ENCODE measurements at regions of chr4 and their contacts with region 1.

Region 1: GRCh38 chr4:140861359-140862176 is 105.4 kb upstream of the TBC1D9 start:
- DNase-seq: peak; percentile 28
- H3K4me3 Mint-ChIP-seq: no peak overlapping the region
- H3K27ac Mint-ChIP-seq: no peak overlapping the region
- H3K4me1 Mint-ChIP-seq: peaks cover 7% of the 10 kb centered on the region
- H3K27me3 Mint-ChIP-seq: peaks cover 6% of the 10 kb centered on the region

Region 2: DNA sequence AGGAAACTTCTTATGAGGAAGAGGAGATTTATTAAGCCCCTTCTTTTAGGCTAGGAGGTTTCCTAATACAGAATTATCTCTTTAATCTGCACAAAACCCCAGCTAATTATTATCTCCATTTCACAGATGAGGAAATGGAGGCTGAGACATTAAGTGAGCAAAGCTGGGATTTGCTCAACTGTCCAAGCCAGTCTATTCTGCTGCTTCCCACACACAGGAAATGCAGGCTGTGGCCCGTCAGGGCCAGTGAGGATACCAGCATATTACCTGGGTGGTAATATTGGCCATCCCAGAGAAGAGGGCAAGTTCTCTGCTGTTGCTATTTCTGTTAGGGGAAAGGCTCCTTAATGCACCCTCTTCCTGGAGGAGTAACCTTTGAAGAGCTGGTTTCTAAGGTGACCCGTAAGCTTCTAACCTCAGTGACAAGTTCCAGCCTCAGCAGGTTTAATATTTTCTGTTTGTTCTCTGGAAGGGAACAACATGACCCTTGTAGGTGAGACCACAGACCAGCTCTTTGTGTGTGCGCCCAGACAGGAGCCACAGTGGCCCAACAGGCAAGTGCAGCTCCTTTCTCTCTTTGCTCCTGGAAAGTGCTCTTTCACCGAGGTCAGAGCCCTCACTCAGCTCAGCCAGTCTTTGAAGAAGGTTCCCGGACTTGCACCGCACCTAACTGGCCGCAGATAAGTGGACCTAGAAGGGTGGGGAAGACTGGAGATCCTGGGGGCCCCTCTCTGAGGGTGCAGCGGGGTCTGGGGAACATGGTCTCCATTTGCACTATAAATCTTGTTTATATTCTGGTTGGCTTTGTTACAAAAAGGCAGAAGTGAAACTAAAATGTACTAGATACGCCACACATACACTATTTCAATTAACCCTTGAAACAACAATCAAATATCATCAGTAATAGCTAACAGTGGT is 140.9 kb before region 1 on chr4:
- intact Hi-C with region 1: no loop called
- DNase-seq: no peak
- H3K4me3 Mint-ChIP-seq: peak overlapping the region; percentile 23
- H3K27ac Mint-ChIP-seq: no peak overlapping the region
- H3K4me1 Mint-ChIP-seq: no peaks in the 10 kb centered on the region
- H3K27me3 Mint-ChIP-seq: peaks cover 2% of the 10 kb centered on the region

Region 3: DNA sequence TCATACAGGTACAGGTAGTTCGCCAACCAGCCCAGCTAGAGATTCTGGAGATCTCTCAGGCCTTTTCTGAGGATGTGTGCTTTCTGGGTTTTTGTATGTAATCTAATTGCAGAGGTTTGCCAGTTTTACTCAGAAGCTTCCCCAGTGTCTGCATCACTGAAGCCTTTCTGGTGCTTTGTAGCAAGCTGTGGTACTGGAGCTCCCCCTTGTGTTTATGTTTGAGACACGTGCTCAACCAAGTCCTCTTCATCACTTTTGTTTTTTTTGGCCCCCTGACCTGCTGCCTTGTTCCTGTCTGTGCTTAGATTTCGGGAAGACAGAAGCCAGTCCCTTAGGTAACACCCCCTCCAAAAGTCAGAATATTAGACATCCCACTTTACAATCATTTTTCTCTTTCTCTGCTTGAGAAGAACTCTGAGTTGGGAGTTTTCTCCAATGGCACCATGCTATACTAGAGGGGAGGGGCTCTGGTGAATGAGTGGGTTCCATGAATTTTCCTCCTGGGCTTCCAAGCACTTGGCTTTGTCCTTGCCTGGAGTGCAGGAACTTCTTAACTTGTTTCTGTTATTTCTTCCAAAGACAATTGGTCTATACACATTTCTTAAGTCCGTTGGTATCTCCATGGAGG is 23.0 kb after region 1 on chr4:
- intact Hi-C with region 1: loop called (anchors 1 kb)
- DNase-seq: peak; percentile 5
- H3K4me3 Mint-ChIP-seq: no peak overlapping the region
- H3K27ac Mint-ChIP-seq: no peak overlapping the region
- H3K4me1 Mint-ChIP-seq: no peaks in the 10 kb centered on the region
- H3K27me3 Mint-ChIP-seq: peaks cover 2% of the 10 kb centered on the region

Region 4: DNA sequence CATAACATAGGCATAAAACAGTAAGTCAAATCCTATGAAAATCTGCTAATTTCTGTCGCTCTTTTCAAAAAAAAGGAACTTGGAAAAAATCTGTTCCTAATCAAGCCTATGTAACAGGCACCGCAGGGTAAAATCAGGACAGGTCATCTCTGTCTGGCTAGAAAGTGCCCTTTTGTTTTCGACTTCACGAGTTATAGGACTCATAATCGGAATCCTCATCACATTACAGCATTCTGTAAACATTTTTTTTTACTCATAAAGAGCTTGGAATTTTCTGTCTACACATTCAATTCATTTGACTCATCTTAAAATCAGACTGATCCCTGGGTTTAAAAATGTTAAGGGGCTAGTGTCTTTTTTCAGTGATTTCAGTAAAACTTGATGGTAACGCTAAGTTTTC is 76.3 kb after region 1 on chr4:
- intact Hi-C with region 1: no loop called
- DNase-seq: no peak
- H3K4me3 Mint-ChIP-seq: no peak overlapping the region
- H3K27ac Mint-ChIP-seq: no peak overlapping the region
- H3K4me1 Mint-ChIP-seq: no peaks in the 10 kb centered on the region
- H3K27me3 Mint-ChIP-seq: no peaks in the 10 kb centered on the region

Region 5: GRCh38 chr4:141109983-141110382 is 248.4 kb after region 1 on chr4:
- intact Hi-C with region 1: no loop called
- DNase-seq: no peak
- H3K4me3 Mint-ChIP-seq: no peak overlapping the region
- H3K27ac Mint-ChIP-seq: no peak overlapping the region
- H3K4me1 Mint-ChIP-seq: no peaks in the 10 kb centered on the region
- H3K27me3 Mint-ChIP-seq: no peaks in the 10 kb centered on the region

Region 6: DNA sequence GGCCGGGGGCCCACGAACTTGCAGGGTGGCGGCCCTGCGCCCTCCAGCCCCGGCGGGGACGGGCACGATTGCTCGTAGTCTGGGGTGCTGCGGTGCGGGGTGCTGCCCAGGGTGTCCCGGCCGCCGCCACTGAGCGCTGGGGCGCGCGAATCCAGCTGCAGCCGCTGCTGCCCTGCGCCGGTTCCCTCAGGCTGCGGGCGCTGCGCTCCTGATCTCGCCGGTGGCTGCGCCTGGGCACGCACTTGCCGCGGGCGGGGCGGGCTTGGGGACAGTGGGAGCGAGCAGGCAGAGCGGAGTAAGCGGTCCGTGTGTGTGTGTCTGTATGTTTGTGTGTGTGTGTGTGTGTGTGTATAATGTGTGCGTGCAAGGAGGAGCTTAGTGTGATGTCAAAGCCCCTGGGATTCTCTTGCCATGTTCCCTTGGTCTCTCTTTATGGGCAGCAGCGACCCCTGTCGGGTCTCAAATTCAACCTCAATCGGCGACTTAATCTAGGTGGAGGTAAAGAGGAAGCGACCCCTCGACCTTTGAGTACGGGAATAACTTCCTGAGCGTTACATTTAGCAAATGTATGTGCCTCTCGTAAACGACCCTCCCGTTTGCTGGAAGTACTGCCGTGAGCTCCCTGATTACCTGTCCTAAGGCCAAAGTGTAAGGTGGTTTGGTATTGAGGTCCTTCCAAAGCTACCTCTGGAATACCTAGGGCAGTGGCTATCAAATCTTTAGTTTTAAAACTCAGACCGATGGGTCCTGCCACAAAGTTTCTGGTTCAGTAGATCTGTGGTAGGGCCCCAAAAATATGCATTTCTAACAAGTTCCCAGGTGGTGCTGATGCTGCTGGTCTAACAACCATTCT is 271.8 kb after region 1 on chr4 and contains the start of gene RNF150:
- intact Hi-C with region 1: loop called (anchors 1 kb)
- DNase-seq: peak; percentile 2
- H3K4me3 Mint-ChIP-seq: peak within 1 kb of the TSS; percentile 87
- H3K27ac Mint-ChIP-seq: peak within 1 kb of the TSS; percentile 38
- H3K4me1 Mint-ChIP-seq: peaks cover 8% of the 10 kb centered on the region
- H3K27me3 Mint-ChIP-seq: peaks cover 68% of the 10 kb centered on the region
- total RNA-seq, gene RNF150: 0.07 TPM in 1 of 2 replicates, not detected in the other

Region 7: DNA sequence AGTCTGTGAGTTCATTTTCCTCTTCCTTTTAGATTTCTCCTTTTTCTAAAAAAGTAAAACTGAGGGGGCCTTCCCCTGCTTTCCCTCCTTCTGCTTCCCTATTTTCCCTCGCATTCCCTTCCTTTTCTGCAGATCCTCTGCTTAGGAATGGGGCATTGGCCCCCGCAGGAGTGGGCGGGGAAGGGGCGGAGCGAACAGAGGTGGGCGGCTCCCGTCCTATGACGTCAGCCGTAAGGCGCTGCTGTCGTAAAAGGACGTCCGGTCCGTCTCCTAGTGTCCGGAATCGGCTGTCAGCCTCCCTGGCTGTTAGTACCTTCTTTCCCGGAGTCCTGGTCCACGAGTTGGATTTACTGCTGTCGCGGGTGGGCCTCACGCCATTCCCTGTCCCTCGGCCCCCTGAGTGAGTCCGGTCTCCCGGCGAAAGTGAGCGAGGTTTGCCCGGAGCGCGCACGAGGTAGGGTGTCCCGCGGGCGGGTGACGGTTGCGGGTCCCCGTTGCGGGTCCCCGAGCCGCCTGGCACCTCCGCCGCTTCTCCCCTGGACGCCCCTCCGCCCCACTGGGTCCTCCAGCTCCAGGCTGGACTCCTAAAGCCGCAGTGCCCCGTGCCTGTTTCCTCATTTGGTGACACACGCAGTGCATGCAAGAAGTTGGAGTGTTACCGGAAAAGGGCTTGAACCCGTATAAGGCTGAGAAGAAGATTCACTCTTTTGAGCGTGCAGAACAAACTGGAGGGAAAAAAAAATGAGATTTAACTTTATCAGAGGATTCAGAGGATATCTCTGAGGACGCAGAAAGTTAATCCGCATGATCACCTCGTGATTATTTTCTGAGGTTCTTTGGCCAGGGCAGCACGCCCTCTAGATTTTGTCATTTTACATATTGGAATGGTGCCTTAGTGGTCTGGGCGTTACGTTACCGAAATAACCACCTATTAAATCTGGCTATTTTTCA is 359.4 kb after region 1 on chr4 and contains the start of gene ZNF330:
- intact Hi-C with region 1: loop called (anchors 2 kb)
- DNase-seq: peak; percentile 83
- H3K4me3 Mint-ChIP-seq: peak within 1 kb of the TSS; percentile 93
- H3K27ac Mint-ChIP-seq: peak within 1 kb of the TSS; percentile 98
- H3K4me1 Mint-ChIP-seq: peaks cover 47% of the 10 kb centered on the region
- H3K27me3 Mint-ChIP-seq: peaks cover 6% of the 10 kb centered on the region
- total RNA-seq, gene ZNF330: 57.8 and 62.9 TPM in 2 replicates

Measured in activated T-helper 1 cell treated with anti-CD3 and anti-CD28 coated beads, Interleukin-12 subunit alpha, Interleukin-12 subunit beta, Interleukin-2, Interleukin-4 antibody, amounts not matched to agents 30 ng/mL and 10 ng/mL and 1 ng/mL, durations not matched to agents 14 hours and 24 hours and 36 hours (primary cell).